WTC11 (cell line): ENCODE measurements at regions of chr15 and their contacts with region 1.

Region 1: GRCh38 chr15:60179786-60180391 is 175.8 kb downstream of the FOXB1 start:
- DNase-seq: no peak
- ATAC-seq: peak; percentile 71
- H3K4me3 Mint-ChIP-seq: no peak overlapping the region
- H3K27ac Mint-ChIP-seq: no peak overlapping the region
- H3K4me1 Mint-ChIP-seq: peaks cover 17% of the 10 kb centered on the region
- H3K27me3 Mint-ChIP-seq: no peaks in the 10 kb centered on the region
- CTCF ChIP-seq: peak; percentile 70

Region 2: GRCh38 chr15:59997070-59997701 is 182.7 kb before region 1 on chr15:
- CTCF ChIA-PET with region 1: interaction called, 24 read pairs
- POLR2A ChIA-PET with region 1: interaction called, 3 read pairs
- DNase-seq: peak; percentile 96
- ATAC-seq: peak; percentile 45
- H3K4me3 Mint-ChIP-seq: peak overlapping the region; percentile 87
- H3K27ac Mint-ChIP-seq: peak overlapping the region; percentile 99
- H3K4me1 Mint-ChIP-seq: peaks cover 75% of the 10 kb centered on the region
- H3K27me3 Mint-ChIP-seq: peaks cover 12% of the 10 kb centered on the region
- CTCF ChIP-seq: no peak